Activated T-helper 2 cell treated with anti-CD3 and anti-CD28 coated beads, Interferon-gamma antibody, Interleukin-2, Interleukin-4, amounts not matched to agents 10 μg/mL and 5 μg/mL and 100 μg/mL, durations not matched to agents 14 hours and 24 hours and 36 hours (primary cell): ENCODE measurements at regions of chr10 and their contacts with region 1.

Region 1: DNA sequence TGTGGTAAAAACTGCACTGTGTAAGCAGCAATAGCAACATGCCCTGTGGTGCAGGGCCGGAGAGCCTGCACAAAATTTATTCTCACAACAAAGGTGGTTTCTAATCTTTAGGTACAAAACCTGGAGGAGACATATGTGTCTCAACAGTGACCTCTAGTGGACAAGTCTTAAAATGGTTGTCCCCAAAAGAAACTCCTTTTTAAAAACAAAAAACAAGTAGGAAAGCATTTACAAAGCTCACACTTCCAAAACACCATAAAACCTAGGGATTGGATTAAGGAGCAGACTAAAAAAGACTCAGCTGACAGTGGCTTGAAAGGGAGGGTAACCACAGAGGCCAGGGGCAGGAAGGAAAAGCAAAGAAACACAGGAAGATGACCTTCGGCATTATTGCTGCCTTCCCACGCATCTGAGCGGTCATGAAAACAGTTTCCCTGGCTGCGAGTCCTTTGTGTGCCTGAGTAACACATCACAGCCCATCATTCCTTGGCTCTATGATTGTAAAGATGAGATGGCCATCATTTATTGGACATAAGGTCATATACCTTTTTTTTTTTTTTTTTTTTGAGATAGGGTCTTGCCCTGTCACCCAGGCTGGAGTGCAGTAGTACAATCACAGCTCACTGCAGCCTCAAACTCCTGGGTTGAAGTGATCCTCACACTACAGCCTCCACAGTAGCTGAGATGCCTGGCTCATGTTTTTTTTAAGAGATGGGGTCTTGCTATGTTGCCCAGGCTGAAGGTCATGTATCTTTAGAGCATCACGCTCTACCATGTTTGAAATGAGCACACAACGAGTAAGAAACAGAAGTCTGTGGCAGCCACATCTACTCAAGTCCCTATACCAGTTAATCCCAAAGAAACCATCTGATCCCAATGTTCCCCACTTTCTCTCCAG is 39.5 kb downstream of the RSU1 start:
- DNase-seq: no peak
- H3K4me3 Mint-ChIP-seq: no peak overlapping the region
- H3K27ac Mint-ChIP-seq: peak overlapping the region; percentile 59
- H3K4me1 Mint-ChIP-seq: peaks cover 22% of the 10 kb centered on the region
- H3K27me3 Mint-ChIP-seq: no peaks in the 10 kb centered on the region

Region 2: DNA sequence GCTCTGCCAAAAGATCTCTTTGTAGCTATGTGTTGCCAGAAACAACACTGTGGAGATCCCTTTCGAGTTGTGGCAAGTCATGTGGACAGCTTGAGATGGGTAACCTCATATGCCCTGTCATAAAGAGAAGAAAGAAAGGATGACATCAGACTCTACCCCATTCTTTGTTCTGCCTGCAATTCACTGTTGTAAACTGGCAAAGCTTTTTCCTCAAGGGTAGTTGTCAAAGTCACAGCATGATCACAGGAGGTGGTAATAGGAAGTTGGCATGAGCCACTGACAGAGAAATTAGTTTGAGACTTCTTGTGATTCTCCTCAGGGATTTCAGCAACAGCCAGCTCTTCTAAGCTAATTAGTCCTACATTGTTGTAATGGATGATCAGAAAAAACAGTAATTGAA is 898.1 kb before region 1 on chr10:
- intact Hi-C with region 1: loop called (anchors 5 kb)
- DNase-seq: no peak
- H3K4me3 Mint-ChIP-seq: no peak overlapping the region
- H3K27ac Mint-ChIP-seq: no peak overlapping the region
- H3K4me1 Mint-ChIP-seq: no peaks in the 10 kb centered on the region
- H3K27me3 Mint-ChIP-seq: peaks cover 43% of the 10 kb centered on the region

Region 3: DNA sequence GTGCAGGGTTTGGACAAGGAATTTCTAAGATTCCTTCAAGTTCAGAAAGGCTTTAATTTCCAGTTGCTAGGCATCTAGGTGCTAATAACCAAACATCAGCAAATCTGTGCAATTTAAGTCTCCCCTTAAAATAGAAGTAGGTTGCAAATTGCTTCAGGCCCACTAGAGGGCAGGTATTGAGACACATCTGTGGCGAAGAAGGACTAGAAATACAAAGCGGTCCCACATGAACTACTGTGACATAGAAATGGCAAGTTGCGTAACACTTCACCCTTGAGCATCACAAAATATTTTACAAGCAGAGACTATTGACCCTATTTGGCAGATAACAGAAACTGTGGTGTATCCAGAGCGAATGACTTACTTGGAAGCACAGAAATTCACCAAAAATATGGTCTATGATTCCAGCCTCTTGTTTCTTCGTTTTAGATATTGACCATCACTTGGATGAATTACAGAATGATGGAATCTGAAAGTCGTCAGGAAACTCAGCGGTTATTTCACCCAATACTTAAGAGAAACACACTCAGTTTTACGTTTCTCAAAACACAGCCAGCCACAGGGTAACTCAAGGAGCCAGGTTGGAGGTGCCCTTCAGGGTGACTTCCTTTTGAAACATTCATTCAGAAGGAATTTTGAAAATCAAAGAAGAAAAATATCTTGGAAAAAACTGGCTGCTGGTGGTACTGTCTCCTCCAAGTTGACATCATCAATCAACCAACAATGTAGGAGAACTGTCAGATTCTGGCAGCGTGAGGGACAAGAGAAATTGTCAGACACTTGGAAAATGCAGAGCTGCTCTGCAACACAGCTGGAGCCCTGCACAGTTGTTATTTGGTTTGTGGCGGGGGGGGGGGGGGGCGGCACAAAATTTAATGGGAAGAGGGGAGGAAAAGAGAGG is 661.1 kb before region 1 on chr10:
- intact Hi-C with region 1: loop called (anchors 10 kb)
- DNase-seq: no peak
- H3K4me3 Mint-ChIP-seq: no peak overlapping the region
- H3K27ac Mint-ChIP-seq: no peak overlapping the region
- H3K4me1 Mint-ChIP-seq: no peaks in the 10 kb centered on the region
- H3K27me3 Mint-ChIP-seq: no peaks in the 10 kb centered on the region

Region 4: GRCh38 chr10:16646181-16647059 is 131.3 kb before region 1 on chr10:
- intact Hi-C with region 1: loop called (anchors 5 kb)
- DNase-seq: no peak
- H3K4me3 Mint-ChIP-seq: no peak overlapping the region
- H3K27ac Mint-ChIP-seq: peak overlapping the region; percentile 48
- H3K4me1 Mint-ChIP-seq: peaks cover 20% of the 10 kb centered on the region
- H3K27me3 Mint-ChIP-seq: no peaks in the 10 kb centered on the region

Region 5: DNA sequence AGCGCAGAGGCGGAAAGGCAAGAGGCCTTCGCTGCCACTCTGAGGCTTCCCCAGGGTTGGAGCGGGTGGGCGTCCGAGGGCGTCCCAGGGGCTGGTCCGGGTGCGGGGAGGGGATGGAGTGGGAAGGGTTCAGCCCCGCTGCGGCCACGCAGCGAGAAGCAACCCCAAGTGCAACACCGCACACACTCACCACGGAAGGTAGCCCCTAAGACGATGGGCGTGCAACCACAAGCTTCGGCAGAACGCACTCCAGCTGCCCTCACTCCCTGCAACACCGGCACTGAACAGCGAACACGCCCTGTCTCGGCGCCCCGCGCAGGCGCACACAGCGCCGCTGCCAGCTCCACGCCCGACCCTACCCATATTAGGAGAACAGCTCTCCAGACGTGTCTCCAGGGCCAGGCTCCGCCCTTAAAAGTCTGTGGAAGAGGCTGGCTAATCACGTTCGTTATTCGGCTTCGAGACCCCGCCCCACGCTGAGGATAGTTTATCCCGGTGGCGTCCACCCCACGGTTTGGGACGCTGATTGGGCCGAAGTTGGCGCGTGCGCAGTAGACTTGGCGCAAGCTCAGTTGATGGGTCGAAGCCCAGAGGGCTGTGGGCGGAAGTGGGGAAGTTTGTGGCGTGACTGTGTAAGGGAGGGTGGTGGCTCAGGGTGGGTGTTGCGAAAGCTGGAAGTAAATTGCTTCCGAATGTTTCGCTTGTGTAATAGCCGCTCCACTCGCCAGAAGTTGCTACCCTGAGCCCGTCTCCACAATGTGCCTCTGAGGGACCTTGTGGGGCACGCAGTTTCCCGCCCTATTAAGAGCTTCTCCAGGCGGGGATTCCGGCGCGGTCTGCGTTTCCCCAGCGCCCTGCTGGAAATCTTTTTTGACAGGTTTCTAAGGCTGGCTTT is 39.6 kb after region 1 on chr10 and contains the start of gene RSU1:
- intact Hi-C with region 1: loop called (anchors 1 kb)
- DNase-seq: peak; percentile 100
- H3K4me3 Mint-ChIP-seq: peak within 1 kb of the TSS; percentile 93
- H3K27ac Mint-ChIP-seq: peak within 1 kb of the TSS; percentile 79
- H3K4me1 Mint-ChIP-seq: peaks cover 27% of the 10 kb centered on the region
- H3K27me3 Mint-ChIP-seq: peaks cover 10% of the 10 kb centered on the region
- total RNA-seq, gene RSU1: 49.1 and 54.0 TPM in 2 replicates

Region 6: GRCh38 chr10:16904639-16905061 is 126.9 kb after region 1 on chr10:
- intact Hi-C with region 1: no loop called
- DNase-seq: no peak
- H3K4me3 Mint-ChIP-seq: no peak overlapping the region
- H3K27ac Mint-ChIP-seq: no peak overlapping the region
- H3K4me1 Mint-ChIP-seq: peaks cover 7% of the 10 kb centered on the region
- H3K27me3 Mint-ChIP-seq: peaks cover 6% of the 10 kb centered on the region

Region 7: DNA sequence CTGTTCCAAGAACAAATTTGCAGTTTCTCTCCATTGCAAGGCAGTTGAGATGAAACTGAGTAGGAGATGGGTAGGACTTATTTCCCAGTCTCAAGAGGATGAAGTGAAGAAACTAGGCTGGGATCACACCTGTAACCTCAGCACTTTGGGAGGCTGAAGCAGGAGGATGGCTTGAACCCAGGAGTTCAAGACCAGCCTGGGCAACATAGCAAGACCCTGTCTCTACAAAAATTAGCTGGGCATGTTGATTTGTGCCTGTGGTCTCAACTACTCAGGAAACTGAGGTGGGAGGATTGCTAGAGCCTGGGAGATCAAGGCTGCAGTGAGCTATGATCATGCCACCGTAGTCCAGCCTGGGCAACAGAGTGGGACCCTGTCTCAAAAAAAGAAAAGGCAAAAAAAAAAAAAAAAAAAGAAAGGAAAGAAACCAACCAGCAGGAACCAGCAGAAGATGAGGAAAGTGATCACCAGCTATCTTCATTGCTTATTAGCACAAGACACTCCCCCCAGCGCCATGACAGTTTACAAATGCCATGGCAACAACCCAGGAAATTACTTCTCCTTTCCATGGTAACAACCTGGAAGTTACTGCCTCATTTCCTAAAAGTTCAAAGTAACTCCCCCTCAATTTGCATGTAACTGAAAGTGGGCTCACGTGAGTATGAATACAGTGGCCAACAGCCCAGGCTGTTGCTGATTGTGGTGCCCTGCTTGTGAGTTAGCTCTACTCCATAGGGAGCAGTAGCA is 694.9 kb after region 1 on chr10:
- intact Hi-C with region 1: no loop called
- DNase-seq: no peak
- H3K4me3 Mint-ChIP-seq: no peak overlapping the region
- H3K27ac Mint-ChIP-seq: no peak overlapping the region
- H3K4me1 Mint-ChIP-seq: peaks cover 5% of the 10 kb centered on the region
- H3K27me3 Mint-ChIP-seq: peaks cover 23% of the 10 kb centered on the region